ENCODE measurements at regions of chr17 and their contacts with region 1.

Region 1: GRCh38 chr17:50177983-50178834 is 12.4 kb downstream of the SGCA start:
- DNase-seq: peak; percentile 70 to 93
- ATAC-seq: peak; percentile 90 to 91
- H3K4me3 ChIP-seq: peak overlapping the region in 1 of 4 donors; percentile 21
- H3K27ac ChIP-seq: peak overlapping the region; percentile 98 to 100 (median 99)
- H3K4me1 ChIP-seq: peaks cover 26 to 39% of the 10 kb centered on the region in 2 donors
- H3K27me3 ChIP-seq: no peaks in the 10 kb centered on the region
- CTCF ChIP-seq: peak in 4 of 5 experiments; percentile 50 to 67 (median 54)
- POLR2A ChIP-seq: peak in 1 of 2 donors; percentile 48

Region 2: DNA sequence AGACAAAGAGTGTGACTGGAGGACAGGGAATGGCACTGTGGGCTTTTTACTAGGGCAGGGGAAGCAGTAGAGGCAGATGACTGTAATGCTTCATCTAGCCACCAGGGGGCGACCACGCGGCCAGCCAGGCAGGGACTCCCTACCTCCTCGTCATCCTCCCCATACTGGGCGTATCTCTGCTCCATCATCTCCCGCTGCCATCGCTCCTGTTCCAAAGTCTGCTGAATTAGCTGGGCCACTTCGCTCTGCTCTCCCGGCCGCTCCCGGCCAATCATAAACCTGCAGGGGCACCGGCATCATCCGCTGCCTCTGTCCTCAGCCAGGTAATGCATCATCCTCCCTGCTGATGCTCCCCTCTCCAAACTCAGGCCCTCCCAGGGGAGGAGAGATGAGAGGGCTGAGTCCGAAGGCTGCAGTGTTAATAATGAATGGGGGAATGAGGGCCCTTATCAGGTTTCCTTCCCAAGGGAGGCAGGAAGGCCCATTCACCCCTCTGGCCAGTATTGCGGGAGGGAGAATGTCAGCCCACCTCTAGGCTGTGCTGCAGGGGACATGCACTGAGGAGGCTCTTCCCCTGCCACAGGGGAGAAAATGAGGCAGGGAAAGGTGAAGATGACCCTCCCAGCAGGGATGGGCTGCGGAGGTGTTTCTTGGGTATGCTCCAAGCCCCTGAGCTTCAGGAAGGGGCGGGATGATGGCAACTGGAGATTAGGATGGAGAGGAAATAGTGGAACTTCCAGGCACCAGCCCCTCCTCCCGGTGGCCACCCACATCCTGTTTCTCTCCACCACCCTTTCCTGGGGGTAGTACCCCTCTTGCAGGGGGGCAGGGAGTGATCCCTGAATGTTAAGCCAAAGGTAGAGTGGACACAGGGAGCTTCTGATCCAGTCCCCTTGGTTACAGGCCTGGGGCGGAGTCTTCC is 38.0 kb before region 1 on chr17:
- in situ Hi-C with region 1: no loop called
- intact Hi-C with region 1: no loop called
- DNase-seq: peak; percentile 57 to 78
- ATAC-seq: peak; percentile 71 to 82
- H3K4me3 ChIP-seq: no peak overlapping the region
- H3K27ac ChIP-seq: peak overlapping the region in 3 of 4 donors; percentile 34 to 60 (median 53)
- H3K4me1 ChIP-seq: peaks cover 5 to 19% of the 10 kb centered on the region in 2 donors
- H3K27me3 ChIP-seq: no peaks in the 10 kb centered on the region
- CTCF ChIP-seq: peak; percentile 93 to 98 (median 97)
- POLR2A ChIP-seq: no peak

Region 3: DNA sequence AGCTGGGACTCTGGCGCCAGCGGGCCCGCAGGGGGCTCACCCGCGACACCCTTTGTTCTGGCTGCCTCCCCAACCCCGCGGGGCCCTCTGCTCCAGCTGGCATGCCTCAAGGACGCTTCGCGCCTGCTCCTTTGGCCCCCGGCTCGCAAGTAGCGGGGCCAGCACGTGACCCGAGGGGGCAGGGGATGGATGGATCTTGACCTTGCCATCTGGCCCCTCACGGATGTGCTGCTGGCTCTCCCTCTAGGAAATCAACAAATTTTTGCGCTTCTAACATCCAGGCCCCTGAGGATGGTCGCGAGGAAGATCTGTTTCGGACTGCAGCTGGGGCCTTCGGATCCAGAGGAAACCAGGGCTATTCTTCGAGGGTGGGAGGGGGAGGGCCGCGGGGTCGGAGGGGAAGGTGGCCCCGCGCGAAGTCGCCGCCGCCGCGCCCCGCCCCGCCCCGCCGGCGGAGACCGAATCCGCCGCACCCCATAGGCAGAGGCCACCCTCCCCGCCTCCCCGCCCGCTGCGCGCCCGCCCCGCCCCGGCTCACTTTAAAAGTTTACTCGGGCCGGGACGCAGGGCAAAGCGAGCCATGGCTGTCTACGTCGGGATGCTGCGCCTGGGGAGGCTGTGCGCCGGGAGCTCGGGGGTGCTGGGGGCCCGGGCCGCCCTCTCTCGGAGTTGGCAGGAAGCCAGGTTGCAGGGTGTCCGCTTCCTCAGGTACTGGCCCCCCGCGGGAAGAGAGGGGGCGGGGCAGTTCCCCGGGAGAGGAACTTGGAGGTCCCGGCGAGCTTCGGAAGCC is 247.7 kb after region 1 on chr17 and contains the start of gene ACSF2:
- in situ Hi-C with region 1: no loop called
- intact Hi-C with region 1: loop called (anchors 5 kb)
- DNase-seq: peak; percentile 69 to 77
- ATAC-seq: peak; percentile 48 to 55
- H3K4me3 ChIP-seq: peak within 1 kb of the TSS; percentile 68 to 94 (median 86)
- H3K27ac ChIP-seq: peak within 1 kb of the TSS; percentile 93 to 96 (median 94)
- H3K4me1 ChIP-seq: peaks cover 40 to 50% of the 10 kb centered on the region in 2 donors
- H3K27me3 ChIP-seq: no peaks in the 10 kb centered on the region
- CTCF ChIP-seq: no peak
- POLR2A ChIP-seq: peak; percentile 81 to 88
- total RNA-seq, gene ACSF2: 8.7 to 61.4 (median 34.2) TPM

Measured in gastrocnemius medialis (tissue), 4 donors.